B cell (primary cell): ENCODE measurements at regions of chr14 and their contacts with region 1.

Region 1: DNA sequence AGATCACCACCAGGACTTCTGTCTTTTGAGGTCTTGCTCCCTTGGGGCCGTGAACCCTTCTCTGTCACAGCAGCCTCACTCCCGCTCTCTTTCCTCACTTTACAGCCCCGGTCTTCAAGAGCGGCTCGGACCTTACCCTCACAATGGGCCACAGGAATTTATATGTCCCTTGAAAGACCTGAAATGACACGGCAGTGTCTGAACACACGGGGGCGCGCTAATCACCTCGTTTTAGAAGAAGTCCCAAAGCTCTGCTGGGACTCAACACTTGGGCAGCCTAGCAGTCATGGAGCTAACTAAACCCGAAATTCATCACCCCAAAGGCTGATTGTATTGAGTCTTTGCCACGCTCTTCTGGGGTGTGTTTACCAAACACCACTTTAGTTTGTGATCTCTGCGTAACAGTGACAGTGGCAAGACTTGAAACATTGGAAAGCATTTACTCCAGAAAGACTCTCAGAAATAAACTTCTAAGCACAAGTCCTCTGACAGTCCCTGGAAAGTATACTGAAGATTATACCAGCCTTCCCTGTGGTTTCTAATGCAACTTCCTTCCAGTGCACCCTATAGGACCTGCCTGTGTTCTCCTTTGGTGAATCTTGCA is 29.0 kb downstream of the SERPINA11 start:
- DNase-seq: peak; percentile 39
- ATAC-seq: no peak
- H3K4me3 ChIP-seq: no peak overlapping the region
- H3K4me3 Mint-ChIP-seq: no peak overlapping the region
- H3K27ac ChIP-seq: no peak overlapping the region
- H3K27ac Mint-ChIP-seq: no peak overlapping the region
- H3K4me1 ChIP-seq: no peaks in the 10 kb centered on the region
- H3K4me1 Mint-ChIP-seq: peaks cover 1% of the 10 kb centered on the region
- H3K27me3 ChIP-seq: peaks cover 0 to 8% (median 0%) of the 10 kb centered on the region in 4 experiments
- H3K27me3 Mint-ChIP-seq: peaks cover 15% of the 10 kb centered on the region
- CTCF ChIP-seq: peak; percentile 63

Region 2: GRCh38 chr14:94439453-94440057 is 16.0 kb after region 1 on chr14:
- CTCF ChIA-PET with region 1: interaction called, 14 read pairs
- POLR2A ChIA-PET with region 1: no interaction called
- intact Hi-C with region 1: no loop called
- DNase-seq: no peak
- ATAC-seq: no peak
- H3K4me3 ChIP-seq: no peak overlapping the region
- H3K4me3 Mint-ChIP-seq: no peak overlapping the region
- H3K27ac ChIP-seq: no peak overlapping the region
- H3K27ac Mint-ChIP-seq: no peak overlapping the region
- H3K4me1 ChIP-seq: no peaks in the 10 kb centered on the region
- H3K4me1 Mint-ChIP-seq: no peaks in the 10 kb centered on the region
- H3K27me3 ChIP-seq: peaks cover 0 to 3% (median 0%) of the 10 kb centered on the region in 4 experiments
- H3K27me3 Mint-ChIP-seq: peaks cover 4% of the 10 kb centered on the region
- CTCF ChIP-seq: no peak